ENCODE measurements at regions of chr4 and their contacts with region 1.

Region 1: GRCh38 chr4:81471588-81472288 is at the start of gene RASGEF1B:
- DNase-seq: peak; percentile 98
- ATAC-seq: peak; percentile 79
- H3K4me3 ChIP-seq: peak within 1 kb of the TSS; percentile 85 to 99 (median 98)
- H3K4me3 Mint-ChIP-seq: peak within 1 kb of the TSS; percentile 98
- H3K27ac ChIP-seq: peak within 1 kb of the TSS; percentile 98 to 100
- H3K27ac Mint-ChIP-seq: peak within 1 kb of the TSS; percentile 97
- H3K4me1 ChIP-seq: peaks cover 38 to 46% of the 10 kb centered on the region in 2 donors
- H3K4me1 Mint-ChIP-seq: peaks cover 49% of the 10 kb centered on the region
- H3K27me3 ChIP-seq: no peaks in the 10 kb centered on the region
- H3K27me3 Mint-ChIP-seq: no peaks in the 10 kb centered on the region
- CTCF ChIP-seq: no peak
- total RNA-seq, gene RASGEF1B: 130 and 141 TPM in 2 replicates

Region 2: GRCh38 chr4:81245218-81246009 is 226.3 kb before region 1 on chr4:
- CTCF ChIA-PET with region 1: no interaction called
- POLR2A ChIA-PET with region 1: no interaction called
- intact Hi-C with region 1: no loop called
- DNase-seq: no peak
- ATAC-seq: no peak
- H3K4me3 ChIP-seq: no peak overlapping the region
- H3K4me3 Mint-ChIP-seq: no peak overlapping the region
- H3K27ac ChIP-seq: no peak overlapping the region
- H3K27ac Mint-ChIP-seq: no peak overlapping the region
- H3K4me1 ChIP-seq: no peaks in the 10 kb centered on the region
- H3K4me1 Mint-ChIP-seq: no peaks in the 10 kb centered on the region
- H3K27me3 ChIP-seq: no peaks in the 10 kb centered on the region
- H3K27me3 Mint-ChIP-seq: peaks cover 4% of the 10 kb centered on the region
- CTCF ChIP-seq: no peak

Region 3: GRCh38 chr4:81427344-81427821 is 44.4 kb before region 1 on chr4:
- CTCF ChIA-PET with region 1: interaction called, 10 read pairs
- POLR2A ChIA-PET with region 1: interaction called, 5 read pairs
- intact Hi-C with region 1: no loop called
- DNase-seq: no peak
- ATAC-seq: no peak
- H3K4me3 ChIP-seq: no peak overlapping the region
- H3K4me3 Mint-ChIP-seq: no peak overlapping the region
- H3K27ac ChIP-seq: no peak overlapping the region
- H3K27ac Mint-ChIP-seq: no peak overlapping the region
- H3K4me1 ChIP-seq: peaks cover 0 to 6% of the 10 kb centered on the region in 2 donors
- H3K4me1 Mint-ChIP-seq: peaks cover 12% of the 10 kb centered on the region
- H3K27me3 ChIP-seq: no peaks in the 10 kb centered on the region
- H3K27me3 Mint-ChIP-seq: no peaks in the 10 kb centered on the region
- CTCF ChIP-seq: no peak

Region 4: DNA sequence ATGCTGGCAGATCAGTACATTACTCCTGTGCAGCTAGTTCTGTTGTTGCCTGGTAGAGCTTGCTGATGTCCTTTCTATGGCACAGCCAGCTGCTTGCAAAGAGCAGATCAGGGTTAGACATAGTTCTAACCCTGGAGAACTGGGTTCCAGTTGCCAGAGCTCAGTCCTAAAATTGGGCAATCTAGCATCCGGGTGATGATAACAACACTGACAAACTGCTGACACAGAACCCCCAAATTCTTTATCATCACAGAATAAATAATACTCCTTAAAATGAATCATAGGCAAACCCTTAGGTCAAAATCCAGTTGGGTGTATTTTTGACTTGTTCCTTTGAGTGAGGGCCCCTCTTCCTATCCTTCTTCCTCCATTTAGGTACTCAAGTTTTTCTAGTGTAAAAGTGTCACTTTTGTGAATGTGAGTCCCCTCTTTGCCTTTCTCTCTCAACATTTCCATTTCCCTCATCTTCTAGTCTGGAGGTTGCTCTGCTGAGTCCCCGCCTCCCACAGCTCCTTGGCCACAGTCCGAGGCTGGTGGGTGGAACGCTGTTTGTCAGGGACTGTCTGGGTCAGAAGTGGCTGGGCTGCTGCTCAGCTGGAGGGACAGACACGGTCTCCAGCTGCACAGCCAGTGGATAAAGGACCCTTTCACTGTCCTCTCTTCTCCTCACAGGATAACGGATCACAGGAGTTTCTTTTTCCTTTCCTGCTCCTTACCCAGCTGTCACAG is 93.6 kb after region 1 on chr4:
- CTCF ChIA-PET with region 1: interaction called, 33 read pairs
- POLR2A ChIA-PET with region 1: interaction called, 8 read pairs
- intact Hi-C with region 1: loop called (anchors 1 kb)
- DNase-seq: no peak
- ATAC-seq: no peak
- H3K4me3 ChIP-seq: peak overlapping the region in 2 of 5 experiments; percentile 5 to 6
- H3K4me3 Mint-ChIP-seq: peak overlapping the region; percentile 61
- H3K27ac ChIP-seq: peak overlapping the region; percentile 4 to 21
- H3K27ac Mint-ChIP-seq: peak overlapping the region; percentile 64
- H3K4me1 ChIP-seq: peaks cover 54 to 65% of the 10 kb centered on the region in 2 donors
- H3K4me1 Mint-ChIP-seq: peaks cover 59% of the 10 kb centered on the region
- H3K27me3 ChIP-seq: no peaks in the 10 kb centered on the region
- H3K27me3 Mint-ChIP-seq: no peaks in the 10 kb centered on the region
- CTCF ChIP-seq: no peak

Region 5: GRCh38 chr4:81724925-81725329 is 253.2 kb after region 1 on chr4:
- CTCF ChIA-PET with region 1: interaction called, 20 read pairs
- POLR2A ChIA-PET with region 1: no interaction called
- intact Hi-C with region 1: no loop called
- DNase-seq: peak; percentile 46
- ATAC-seq: peak; percentile 92
- H3K4me3 ChIP-seq: no peak overlapping the region
- H3K4me3 Mint-ChIP-seq: no peak overlapping the region
- H3K27ac ChIP-seq: no peak overlapping the region
- H3K27ac Mint-ChIP-seq: peak overlapping the region; percentile 61
- H3K4me1 ChIP-seq: peaks cover 6 to 13% of the 10 kb centered on the region in 2 donors
- H3K4me1 Mint-ChIP-seq: peaks cover 17% of the 10 kb centered on the region
- H3K27me3 ChIP-seq: no peaks in the 10 kb centered on the region
- H3K27me3 Mint-ChIP-seq: no peaks in the 10 kb centered on the region
- CTCF ChIP-seq: no peak

Region 6: DNA sequence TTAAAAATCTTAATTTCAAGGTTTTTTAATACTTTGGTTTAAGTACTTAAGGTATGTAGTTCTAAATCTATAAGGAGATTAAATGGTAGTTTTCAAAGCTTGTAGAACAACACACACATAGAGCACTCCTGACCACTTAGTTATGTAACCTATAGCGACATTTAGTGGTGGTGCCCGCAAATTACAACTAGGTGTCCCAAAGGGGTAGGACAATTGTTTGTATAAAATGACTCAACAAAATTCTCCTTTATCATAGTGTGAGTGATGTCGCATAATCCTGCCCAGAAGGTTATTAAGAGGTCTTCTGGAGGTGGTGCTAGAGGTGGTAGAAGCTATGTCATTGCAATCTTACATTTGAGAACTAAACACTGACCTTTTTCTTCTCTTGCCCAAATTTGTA is 373.0 kb after region 1 on chr4:
- CTCF ChIA-PET with region 1: interaction called, 332 read pairs
- POLR2A ChIA-PET with region 1: interaction called, 7 read pairs
- intact Hi-C with region 1: loop called (anchors 1 kb)
- DNase-seq: peak; percentile 83
- ATAC-seq: peak; percentile 96
- H3K4me3 ChIP-seq: no peak overlapping the region
- H3K4me3 Mint-ChIP-seq: no peak overlapping the region
- H3K27ac ChIP-seq: no peak overlapping the region
- H3K27ac Mint-ChIP-seq: no peak overlapping the region
- H3K4me1 ChIP-seq: peaks cover 0 to 2% of the 10 kb centered on the region in 2 donors
- H3K4me1 Mint-ChIP-seq: peaks cover 5% of the 10 kb centered on the region
- H3K27me3 ChIP-seq: no peaks in the 10 kb centered on the region
- H3K27me3 Mint-ChIP-seq: no peaks in the 10 kb centered on the region
- CTCF ChIP-seq: peak; percentile 87

Region 7: DNA sequence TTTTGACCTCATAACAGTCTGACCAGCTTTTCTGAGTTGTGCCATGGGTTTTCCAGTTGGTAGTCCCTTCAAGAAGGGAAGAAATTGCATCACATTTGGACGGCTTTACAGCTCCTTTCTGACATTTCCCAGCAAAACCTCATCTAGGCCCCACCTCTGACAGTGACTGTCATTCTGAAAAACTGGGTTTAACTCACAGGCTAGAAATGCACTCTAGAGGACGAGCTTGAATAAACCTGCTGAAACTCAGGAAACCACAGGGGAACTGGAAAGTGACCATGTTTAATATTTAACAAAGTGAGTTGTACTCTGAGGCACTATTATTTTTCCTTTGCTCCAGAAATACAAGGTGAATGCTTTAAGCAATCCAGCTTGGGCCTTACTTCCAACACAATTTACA is 434.2 kb after region 1 on chr4:
- CTCF ChIA-PET with region 1: no interaction called
- POLR2A ChIA-PET with region 1: no interaction called
- intact Hi-C with region 1: no loop called
- DNase-seq: no peak
- ATAC-seq: no peak
- H3K4me3 ChIP-seq: no peak overlapping the region
- H3K4me3 Mint-ChIP-seq: no peak overlapping the region
- H3K27ac ChIP-seq: no peak overlapping the region
- H3K27ac Mint-ChIP-seq: no peak overlapping the region
- H3K4me1 ChIP-seq: no peaks in the 10 kb centered on the region
- H3K4me1 Mint-ChIP-seq: no peaks in the 10 kb centered on the region
- H3K27me3 ChIP-seq: no peaks in the 10 kb centered on the region
- H3K27me3 Mint-ChIP-seq: peaks cover 9% of the 10 kb centered on the region
- CTCF ChIP-seq: no peak

Region 8: GRCh38 chr4:81990898-81991297 is 519.2 kb after region 1 on chr4:
- CTCF ChIA-PET with region 1: no interaction called
- POLR2A ChIA-PET with region 1: no interaction called
- intact Hi-C with region 1: no loop called
- DNase-seq: no peak
- ATAC-seq: no peak
- H3K4me3 ChIP-seq: no peak overlapping the region
- H3K4me3 Mint-ChIP-seq: no peak overlapping the region
- H3K27ac ChIP-seq: no peak overlapping the region
- H3K27ac Mint-ChIP-seq: no peak overlapping the region
- H3K4me1 ChIP-seq: no peaks in the 10 kb centered on the region
- H3K4me1 Mint-ChIP-seq: no peaks in the 10 kb centered on the region
- H3K27me3 ChIP-seq: peaks cover 0 to 5% (median 3%) of the 10 kb centered on the region in 4 experiments
- H3K27me3 Mint-ChIP-seq: peaks cover 17% of the 10 kb centered on the region
- CTCF ChIP-seq: no peak

Region 9: DNA sequence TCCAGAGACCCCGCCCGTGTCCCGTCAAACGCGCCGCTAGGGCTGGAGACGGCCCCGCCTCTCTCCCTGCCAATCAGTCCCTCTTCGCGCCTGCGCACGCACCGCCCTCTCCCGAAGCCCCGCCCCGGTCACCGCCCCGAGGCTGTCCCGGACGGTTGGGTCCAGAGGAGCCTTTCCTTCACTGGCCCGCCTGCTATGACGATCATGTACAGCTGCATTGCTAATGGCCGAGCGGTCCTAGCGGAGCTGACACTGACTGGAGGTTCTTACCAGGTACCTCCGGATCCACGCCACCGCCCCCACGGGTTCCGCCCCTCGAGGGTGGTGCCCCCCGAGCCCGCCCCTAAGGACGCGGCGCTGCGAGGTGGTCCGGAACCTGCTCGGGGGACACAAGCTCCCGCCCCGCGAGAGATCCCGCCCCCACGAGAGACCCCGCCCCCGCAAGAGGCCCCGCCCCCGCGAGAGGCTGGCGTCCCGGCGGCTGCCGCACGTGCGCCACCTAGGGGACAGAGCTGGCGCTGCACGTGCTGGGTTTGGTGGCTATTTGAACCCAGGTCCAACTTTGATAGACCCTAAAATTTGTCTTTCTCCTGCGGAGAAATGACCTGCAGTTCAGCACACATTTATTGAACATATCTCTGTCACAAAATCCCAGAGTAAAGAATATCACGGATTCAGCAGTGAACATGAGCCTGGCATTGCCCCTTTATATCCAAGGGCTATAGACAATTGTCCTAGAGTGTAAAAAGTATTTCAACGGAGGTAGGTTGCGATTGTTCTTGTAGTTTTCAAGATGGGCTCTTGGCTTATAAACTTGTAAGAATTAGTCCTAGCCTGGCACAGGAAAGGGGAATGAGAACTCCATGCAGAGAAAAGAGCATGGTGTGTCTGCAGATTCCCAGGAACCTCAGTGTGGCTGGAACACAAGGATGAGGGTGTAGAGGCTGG is 813.4 kb after region 1 on chr4:
- CTCF ChIA-PET with region 1: interaction called, 9 read pairs
- POLR2A ChIA-PET with region 1: no interaction called
- intact Hi-C with region 1: loop called (anchors 5 kb)
- DNase-seq: peak; percentile 100
- ATAC-seq: peak; percentile 92
- H3K4me3 ChIP-seq: peak overlapping the region; percentile 28 to 74 (median 61)
- H3K4me3 Mint-ChIP-seq: peak overlapping the region; percentile 79
- H3K27ac ChIP-seq: peak overlapping the region; percentile 57 to 59
- H3K27ac Mint-ChIP-seq: peak overlapping the region; percentile 75
- H3K4me1 ChIP-seq: peaks cover 14% of the 10 kb centered on the region in 2 donors
- H3K4me1 Mint-ChIP-seq: peaks cover 19% of the 10 kb centered on the region
- H3K27me3 ChIP-seq: no peaks in the 10 kb centered on the region
- H3K27me3 Mint-ChIP-seq: no peaks in the 10 kb centered on the region
- CTCF ChIP-seq: peak; percentile 95

Region 10: DNA sequence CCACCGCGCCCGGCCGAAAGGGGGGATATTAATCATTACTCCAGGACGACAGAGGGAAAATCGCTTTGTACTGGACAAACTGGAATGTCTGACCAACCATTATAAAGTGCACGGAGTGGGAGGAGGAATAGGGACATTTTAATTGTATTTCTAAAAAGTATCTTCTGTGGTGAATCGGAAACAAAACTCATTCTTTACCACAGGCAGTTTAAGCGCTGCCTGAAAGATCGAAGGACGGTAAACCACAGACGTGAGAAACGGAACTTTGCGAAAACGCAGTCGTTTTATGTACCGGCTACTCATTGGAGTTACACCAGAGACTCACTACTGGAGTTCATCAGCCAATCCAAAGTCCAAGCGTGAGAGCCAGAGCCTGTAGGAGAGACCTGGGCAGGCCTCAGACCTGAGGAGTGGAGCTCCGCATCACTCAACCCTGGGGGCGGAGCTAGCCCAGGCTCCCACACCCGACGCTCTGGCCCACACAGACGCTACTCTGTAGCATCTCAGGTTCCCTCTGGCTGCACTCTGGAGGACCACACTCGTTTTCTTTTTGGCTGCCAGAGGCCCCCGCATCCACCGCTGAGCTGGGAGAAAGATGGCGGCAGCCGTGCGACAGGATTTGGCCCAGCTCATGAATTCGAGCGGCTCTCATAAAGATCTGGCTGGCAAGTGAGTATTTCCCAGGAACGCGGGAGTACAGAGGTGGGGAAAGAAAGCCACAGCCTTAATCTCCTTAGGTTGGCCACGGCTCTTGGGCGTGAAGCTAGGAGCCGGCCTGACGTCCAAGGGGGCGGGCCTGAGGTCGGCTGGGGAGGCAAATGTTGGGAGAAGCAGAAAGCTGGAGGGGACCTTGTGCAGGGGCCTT is 1563.1 kb after region 1 on chr4 and contains the start of gene COPS4:
- CTCF ChIA-PET with region 1: no interaction called
- POLR2A ChIA-PET with region 1: no interaction called
- intact Hi-C with region 1: no loop called
- DNase-seq: peak; percentile 99
- ATAC-seq: peak; percentile 95
- H3K4me3 ChIP-seq: peak within 1 kb of the TSS; percentile 80 to 94 (median 91)
- H3K4me3 Mint-ChIP-seq: peak within 1 kb of the TSS; percentile 98
- H3K27ac ChIP-seq: peak within 1 kb of the TSS; percentile 84 to 86
- H3K27ac Mint-ChIP-seq: peak within 1 kb of the TSS; percentile 98
- H3K4me1 ChIP-seq: peaks cover 10 to 16% of the 10 kb centered on the region in 2 donors
- H3K4me1 Mint-ChIP-seq: peaks cover 34% of the 10 kb centered on the region
- H3K27me3 ChIP-seq: no peaks in the 10 kb centered on the region
- H3K27me3 Mint-ChIP-seq: no peaks in the 10 kb centered on the region
- CTCF ChIP-seq: peak; percentile 34
- total RNA-seq, gene COPS4: 24.5 and 32.8 TPM in 2 replicates